ENCODE measurements at regions of chr20 and their contacts with region 1.

Region 1: GRCh38 chr20:58236612-58237330 is 8.3 kb upstream of the ANKRD60 start:
- DNase-seq: peak; percentile 61
- ATAC-seq: peak; percentile 90
- H3K4me3 ChIP-seq: peak overlapping the region; percentile 72
- H3K27ac ChIP-seq: no peak overlapping the region; the same call in 1 of the 2 replicates
- H3K4me1 ChIP-seq: peaks cover 7% of the 10 kb centered on the region
- H3K27me3 ChIP-seq: no peaks in the 10 kb centered on the region
- CTCF ChIP-seq: peak; percentile 91
- POLR2A ChIP-seq: peak; percentile 8; the same call in 1 of the 2 replicates
- RAD21 ChIP-seq: peak; percentile 90

Region 2: GRCh38 chr20:56497326-56497725 is 1739.4 kb before region 1 on chr20:
- CTCF ChIA-PET with region 1: no interaction called
- POLR2A ChIA-PET with region 1: no interaction called
- dilution Hi-C with region 1: no loop called
- in situ Hi-C with region 1: no loop called
- intact Hi-C with region 1: no loop called
- DNase-seq: no peak
- ATAC-seq: no peak
- H3K4me3 ChIP-seq: no peak overlapping the region
- H3K27ac ChIP-seq: no peak overlapping the region
- H3K4me1 ChIP-seq: 0 out of 2 replicates have a peak, but pooled peaks cover 3% of the 10 kb centered on the region
- H3K27me3 ChIP-seq: no peaks in the 10 kb centered on the region
- CTCF ChIP-seq: no peak
- POLR2A ChIP-seq: no peak
- RAD21 ChIP-seq: no peak

Region 3: DNA sequence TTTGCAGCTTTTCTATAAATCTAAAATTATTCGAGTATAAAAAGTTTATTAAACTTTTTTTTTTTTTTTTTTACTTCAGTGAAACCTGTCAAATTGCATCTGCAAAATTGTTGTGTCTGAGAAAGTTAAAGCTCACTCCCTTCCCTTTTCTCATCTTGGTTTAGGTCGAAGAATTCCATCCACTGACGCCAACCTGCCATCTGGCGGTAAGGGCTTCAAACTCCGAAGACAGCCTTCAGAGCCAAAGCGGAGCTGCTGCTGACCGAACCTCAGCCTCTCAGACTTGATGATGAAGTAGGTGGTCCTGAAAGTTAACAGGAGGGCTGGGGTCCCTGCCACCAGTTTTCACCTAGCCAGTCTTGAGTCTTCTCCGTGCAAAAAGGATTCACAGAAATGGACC is 122.7 kb after region 1 on chr20:
- CTCF ChIA-PET with region 1: no interaction called
- POLR2A ChIA-PET with region 1: no interaction called
- dilution Hi-C with region 1: no loop called
- in situ Hi-C with region 1: no loop called
- intact Hi-C with region 1: loop called (anchors 2 kb)
- DNase-seq: peak; percentile 29
- ATAC-seq: no peak
- H3K4me3 ChIP-seq: no peak overlapping the region
- H3K27ac ChIP-seq: no peak overlapping the region
- H3K4me1 ChIP-seq: no peaks in the 10 kb centered on the region
- H3K27me3 ChIP-seq: no peaks in the 10 kb centered on the region
- CTCF ChIP-seq: peak; percentile 30
- POLR2A ChIP-seq: no peak
- RAD21 ChIP-seq: peak; percentile 49

Region 4: GRCh38 chr20:58433764-58434163 is 197.0 kb after region 1 on chr20:
- CTCF ChIA-PET with region 1: interaction called, 3 read pairs
- POLR2A ChIA-PET with region 1: no interaction called
- dilution Hi-C with region 1: no loop called
- in situ Hi-C with region 1: loop called (anchors 10 kb)
- intact Hi-C with region 1: loop called (anchors 5 kb)
- DNase-seq: peak; percentile 89
- ATAC-seq: peak; percentile 93
- H3K4me3 ChIP-seq: no peak overlapping the region
- H3K27ac ChIP-seq: peak overlapping the region; percentile 69; the same call in 1 of the 2 replicates
- H3K4me1 ChIP-seq: peaks cover 21% of the 10 kb centered on the region
- H3K27me3 ChIP-seq: no peaks in the 10 kb centered on the region
- CTCF ChIP-seq: no peak
- POLR2A ChIP-seq: no peak
- RAD21 ChIP-seq: peak; percentile 13; the same call in 1 of the 2 replicates

Region 5: GRCh38 chr20:58515233-58516184 is 278.7 kb after region 1 on chr20 and contains the start of gene APCDD1L:
- CTCF ChIA-PET with region 1: no interaction called
- POLR2A ChIA-PET with region 1: no interaction called
- dilution Hi-C with region 1: no loop called
- in situ Hi-C with region 1: no loop called
- intact Hi-C with region 1: loop called (anchors 5 kb)
- DNase-seq: peak; percentile 69
- ATAC-seq: peak; percentile 85
- H3K4me3 ChIP-seq: peak within 1 kb of the TSS; percentile 58
- H3K27ac ChIP-seq: peak within 1 kb of the TSS; percentile 27; the same call in 1 of the 2 replicates
- H3K4me1 ChIP-seq: peaks cover 11% of the 10 kb centered on the region
- H3K27me3 ChIP-seq: peaks cover 16% of the 10 kb centered on the region; the same call in 1 of the 2 replicates
- CTCF ChIP-seq: no peak
- POLR2A ChIP-seq: no peak
- RAD21 ChIP-seq: peak; percentile 13; the same call in 1 of the 2 replicates
- total RNA-seq, gene APCDD1L: 2.2 and 2.5 TPM in 2 replicates

Region 6: DNA sequence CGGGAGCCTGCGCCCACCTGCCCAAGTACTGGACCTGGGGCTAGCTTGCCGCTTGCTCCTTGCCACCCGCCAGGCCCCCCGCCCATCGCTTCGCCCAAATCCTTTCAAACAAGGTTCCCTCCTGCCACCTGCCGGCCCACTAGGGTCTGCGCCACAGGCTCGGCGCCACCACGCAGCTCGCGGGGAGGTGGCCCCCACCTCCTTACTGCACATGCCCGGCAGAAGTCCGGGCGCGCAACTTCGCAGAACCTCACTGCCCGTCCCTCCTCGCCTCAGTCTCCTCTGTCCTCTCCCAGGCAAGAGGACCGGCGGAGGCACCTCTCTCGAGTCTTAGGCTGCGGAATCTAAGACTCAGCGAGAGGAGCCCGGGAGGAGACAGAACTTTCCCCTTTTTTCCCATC is 602.7 kb after region 1 on chr20:
- CTCF ChIA-PET with region 1: no interaction called
- POLR2A ChIA-PET with region 1: no interaction called
- dilution Hi-C with region 1: no loop called
- in situ Hi-C with region 1: no loop called
- intact Hi-C with region 1: loop called (anchors 10 kb)
- DNase-seq: peak; percentile 24
- ATAC-seq: peak; percentile 68
- H3K4me3 ChIP-seq: no peak overlapping the region; the same call in 1 of the 2 replicates
- H3K27ac ChIP-seq: no peak overlapping the region
- H3K4me1 ChIP-seq: no peaks in the 10 kb centered on the region; the same call in 1 of the 2 replicates
- H3K27me3 ChIP-seq: peaks cover 51% of the 10 kb centered on the region
- CTCF ChIP-seq: peak; percentile 31; the same call in 1 of the 2 replicates
- POLR2A ChIP-seq: no peak
- RAD21 ChIP-seq: peak; percentile 38

Region 7: DNA sequence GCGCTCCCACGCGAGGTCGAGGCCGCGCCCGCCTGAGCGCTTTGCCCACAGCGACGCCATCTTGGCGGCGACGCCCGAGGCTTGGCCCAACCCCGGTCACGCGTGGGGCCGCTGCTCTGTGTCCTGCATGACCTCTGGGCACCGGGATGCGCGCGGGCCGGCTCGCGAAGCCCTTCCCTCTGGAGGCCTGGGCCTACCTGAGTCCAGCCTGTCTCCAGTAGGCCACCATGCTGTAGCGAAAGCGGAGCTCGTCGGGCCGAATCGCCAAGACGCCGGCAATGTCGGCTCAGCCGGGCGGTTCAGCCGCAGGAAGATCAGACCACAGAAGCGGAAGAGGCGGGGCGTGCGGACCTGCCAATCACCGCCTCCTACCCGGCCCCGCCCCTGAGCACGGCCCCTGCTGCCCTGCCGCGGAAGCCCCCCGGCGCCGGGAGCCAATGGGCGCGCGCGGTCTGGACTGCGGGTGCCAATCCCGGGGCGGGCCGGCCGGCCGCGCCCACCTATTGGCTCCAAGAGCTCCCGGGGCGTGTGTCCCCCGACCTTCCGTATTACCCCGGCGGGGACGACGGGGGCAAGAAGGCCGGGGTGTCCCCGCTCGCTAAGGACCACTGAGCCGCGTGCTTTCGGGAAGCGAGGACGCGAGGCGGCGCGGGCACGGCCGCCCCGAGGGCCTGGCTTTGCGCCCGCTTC is 795.4 kb after region 1 on chr20 and contains the start of gene ATP5F1E:
- CTCF ChIA-PET with region 1: no interaction called
- POLR2A ChIA-PET with region 1: no interaction called
- dilution Hi-C with region 1: no loop called
- in situ Hi-C with region 1: loop called (anchors 25 kb)
- intact Hi-C with region 1: no loop called
- DNase-seq: peak; percentile 89
- ATAC-seq: peak; percentile 99
- H3K4me3 ChIP-seq: peak within 1 kb of the TSS; percentile 93
- H3K27ac ChIP-seq: peak within 1 kb of the TSS; percentile 94
- H3K4me1 ChIP-seq: peaks cover 9% of the 10 kb centered on the region
- H3K27me3 ChIP-seq: no peaks in the 10 kb centered on the region
- CTCF ChIP-seq: no peak
- POLR2A ChIP-seq: peak; percentile 79
- RAD21 ChIP-seq: no peak
- total RNA-seq, gene ATP5F1E: 3.8 and 12.2 TPM in 2 replicates

Region 8: DNA sequence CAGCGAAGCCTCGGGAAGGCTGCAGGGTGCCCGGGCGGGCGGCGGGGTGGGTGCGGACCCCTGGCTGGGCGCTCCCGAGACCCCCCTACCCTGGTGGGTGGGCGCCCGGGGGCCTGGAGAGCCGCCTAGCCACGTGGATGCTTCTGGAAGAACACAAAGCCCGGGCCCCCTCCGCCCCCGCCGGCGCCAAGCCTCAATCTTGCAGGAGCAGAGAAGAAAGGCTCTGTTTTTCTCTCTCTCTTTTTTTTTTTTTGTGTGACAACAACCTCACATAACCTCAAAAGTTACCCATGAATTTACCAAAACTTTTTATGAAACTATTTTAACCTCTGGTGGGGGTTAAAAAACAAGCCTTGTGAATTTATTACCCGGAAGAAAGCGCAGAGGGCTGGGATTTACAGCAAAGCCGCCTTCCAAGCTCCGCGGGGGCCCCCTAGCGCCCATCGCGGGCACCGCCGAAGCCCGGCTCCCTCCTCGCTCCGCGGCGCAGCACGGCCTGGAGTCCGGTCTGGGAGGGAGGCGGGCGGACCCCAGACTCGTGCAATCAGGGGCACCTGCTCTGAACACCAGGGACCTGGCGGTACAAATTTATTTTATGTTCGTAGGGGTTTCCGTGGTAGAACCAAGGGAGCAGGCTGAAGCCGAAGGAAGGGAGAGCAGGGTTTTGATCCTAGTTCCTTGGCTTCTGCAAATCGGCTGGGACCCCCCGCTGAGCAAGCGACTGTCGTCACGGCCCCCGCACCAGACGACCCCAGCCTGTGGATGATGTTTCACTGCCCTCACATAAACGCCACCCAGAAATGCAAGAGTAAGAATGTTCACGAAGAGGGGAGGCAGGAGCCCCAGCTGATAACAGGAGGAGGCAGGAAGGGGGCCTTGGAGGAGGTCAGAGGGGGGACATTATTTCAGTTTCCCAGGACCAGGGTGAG is 985.7 kb after region 1 on chr20:
- CTCF ChIA-PET with region 1: no interaction called
- POLR2A ChIA-PET with region 1: no interaction called
- dilution Hi-C with region 1: no loop called
- in situ Hi-C with region 1: no loop called
- intact Hi-C with region 1: loop called (anchors 10 kb)
- DNase-seq: peak; percentile 66
- ATAC-seq: peak; percentile 99
- H3K4me3 ChIP-seq: peak overlapping the region; percentile 33
- H3K27ac ChIP-seq: no peak overlapping the region
- H3K4me1 ChIP-seq: no peaks in the 10 kb centered on the region
- H3K27me3 ChIP-seq: peaks cover 44% of the 10 kb centered on the region
- CTCF ChIP-seq: peak; percentile 94
- POLR2A ChIP-seq: no peak
- RAD21 ChIP-seq: peak; percentile 92